K562 (cell line): ENCODE measurements at regions of chr7 and their contacts with region 1.

Region 1: GRCh38 chr7:106779877-106780276 is 85.2 kb upstream of the PIK3CG start:
- DNase-seq: peak; percentile 33 to 71 (median 56)
- ATAC-seq: peak; percentile 74
- H3K4me3 ChIP-seq: no peak overlapping the region
- H3K27ac ChIP-seq: no peak overlapping the region
- H3K4me1 ChIP-seq: peaks cover 12 to 56% of the 10 kb centered on the region in 2 experiments; a peak in 4 of 5 replicates
- H3K27me3 ChIP-seq: no peaks in the 10 kb centered on the region
- CTCF ChIP-seq: peak; percentile 66 to 84 (median 69)
- EP300 ChIP-seq: 0 out of 2 replicates have a peak, but pooled peaks have one; percentile 10
- POLR2A ChIP-seq: 0 out of 2 replicates have a peak, but pooled peaks have one; percentile 39
- RAD21 ChIP-seq: peak; percentile 38 to 68; a peak in 3 of 4 replicates

Region 2: GRCh38 chr7:106476751-106477150 is 303.1 kb before region 1 on chr7:
- CTCF ChIA-PET with region 1: no interaction called
- POLR2A ChIA-PET with region 1: no interaction called
- in situ Hi-C with region 1: no loop called
- intact Hi-C with region 1: no loop called
- DNase-seq: no peak
- ATAC-seq: peak; percentile 10; the same call in 1 of the 3 replicates
- H3K4me3 ChIP-seq: no peak overlapping the region
- H3K27ac ChIP-seq: no peak overlapping the region
- H3K4me1 ChIP-seq: peaks cover 4 to 17% of the 10 kb centered on the region in 2 experiments; a peak in 3 of 5 replicates
- H3K27me3 ChIP-seq: no peaks in the 10 kb centered on the region
- CTCF ChIP-seq: no peak
- EP300 ChIP-seq: no peak
- POLR2A ChIP-seq: no peak
- RAD21 ChIP-seq: no peak

Region 3: DNA sequence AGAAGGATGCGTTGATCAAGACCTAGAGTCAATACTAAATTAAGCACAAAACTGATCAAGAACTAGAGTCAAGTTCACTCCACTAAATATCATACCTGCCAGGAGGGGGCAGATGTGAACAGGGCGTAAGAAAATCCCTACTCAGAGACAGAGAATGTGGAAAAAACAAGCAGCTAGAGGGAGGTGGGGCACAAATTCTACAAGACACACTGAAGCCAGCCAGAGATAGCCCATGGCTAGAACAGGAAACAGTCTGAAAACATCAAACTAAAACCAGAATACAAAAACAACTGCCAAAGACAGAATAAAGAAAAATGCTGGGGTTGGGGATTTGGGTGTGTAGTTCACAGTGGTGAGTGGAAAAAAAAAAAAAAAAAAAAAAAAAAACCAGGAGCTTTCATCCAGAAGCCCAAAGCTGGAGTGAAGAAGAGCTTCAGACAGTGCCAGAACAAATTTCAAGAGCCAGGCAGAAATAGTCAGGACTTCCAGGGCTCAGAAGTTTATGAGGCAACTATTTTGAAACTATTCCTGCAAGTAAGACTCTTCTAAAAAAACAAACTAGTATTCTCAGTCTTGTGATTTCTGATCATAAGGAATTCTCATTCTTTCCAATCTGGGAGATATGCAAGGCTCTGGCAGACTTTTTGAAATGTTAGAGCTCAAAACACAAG is 237.2 kb before region 1 on chr7:
- CTCF ChIA-PET with region 1: no interaction called
- POLR2A ChIA-PET with region 1: interaction called, 11 read pairs
- in situ Hi-C with region 1: no loop called
- intact Hi-C with region 1: loop called (anchors 2 kb)
- DNase-seq: peak; percentile 77 to 96 (median 84)
- ATAC-seq: peak; percentile 96
- H3K4me3 ChIP-seq: no peak overlapping the region
- H3K27ac ChIP-seq: peak overlapping the region; percentile 30
- H3K4me1 ChIP-seq: peaks cover 0 to 22% of the 10 kb centered on the region in 2 experiments; a peak in 2 of 5 replicates
- H3K27me3 ChIP-seq: no peaks in the 10 kb centered on the region
- CTCF ChIP-seq: peak; percentile 95 to 98 (median 98)
- EP300 ChIP-seq: peak; percentile 63
- POLR2A ChIP-seq: no peak
- RAD21 ChIP-seq: peak; percentile 100

Region 4: DNA sequence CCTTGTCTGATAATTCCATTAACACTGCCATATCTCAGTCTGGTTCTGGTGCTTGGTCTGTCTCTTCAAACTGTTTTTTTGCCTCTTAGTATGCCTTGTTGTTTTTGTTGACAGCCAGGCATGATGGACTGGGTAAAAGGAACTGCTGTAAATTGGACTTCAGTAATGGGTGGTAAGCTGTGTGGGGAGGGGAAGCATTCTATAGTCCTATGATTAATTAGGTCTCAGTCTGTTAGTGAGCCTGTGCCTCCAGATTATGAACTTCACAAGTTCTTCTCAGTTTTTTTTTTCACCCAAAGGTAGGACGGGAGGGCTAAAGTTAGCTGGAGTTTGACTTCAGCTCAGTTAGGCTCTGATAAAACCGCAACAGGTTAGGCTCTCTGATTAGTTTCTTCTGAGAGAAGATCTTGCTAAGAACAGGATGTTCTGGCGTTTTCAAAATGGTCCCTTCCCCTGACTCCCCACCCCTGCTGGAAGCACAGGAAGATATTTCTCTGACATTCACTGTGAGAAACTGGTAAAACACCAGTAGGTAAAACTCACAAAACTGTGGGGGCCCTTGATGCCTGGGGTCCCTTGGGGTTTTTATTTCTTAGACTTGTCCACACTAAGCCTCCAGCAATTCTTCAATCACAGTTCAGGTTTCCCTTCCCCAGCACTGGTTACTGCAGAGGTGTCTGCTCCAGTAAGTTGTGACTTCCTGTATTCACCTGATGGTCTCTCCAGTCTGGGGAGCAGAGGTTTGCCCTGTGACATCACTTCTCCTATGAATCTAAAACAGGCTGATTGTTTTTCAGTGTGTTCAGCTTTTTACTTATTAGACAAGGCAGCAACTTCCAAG is 75.7 kb before region 1 on chr7:
- CTCF ChIA-PET with region 1: no interaction called
- POLR2A ChIA-PET with region 1: no interaction called
- in situ Hi-C with region 1: no loop called
- intact Hi-C with region 1: no loop called
- DNase-seq: peak in 2 of 4 experiments; percentile 37 to 53
- ATAC-seq: peak; percentile 90
- H3K4me3 ChIP-seq: no peak overlapping the region
- H3K27ac ChIP-seq: peak overlapping the region; percentile 4; the same call in 2 of the 3 replicates
- H3K4me1 ChIP-seq: peaks cover 0 to 10% of the 10 kb centered on the region in 2 experiments; a peak in 3 of 5 replicates
- H3K27me3 ChIP-seq: no peaks in the 10 kb centered on the region
- CTCF ChIP-seq: no peak
- EP300 ChIP-seq: no peak
- POLR2A ChIP-seq: no peak
- RAD21 ChIP-seq: no peak

Region 5: DNA sequence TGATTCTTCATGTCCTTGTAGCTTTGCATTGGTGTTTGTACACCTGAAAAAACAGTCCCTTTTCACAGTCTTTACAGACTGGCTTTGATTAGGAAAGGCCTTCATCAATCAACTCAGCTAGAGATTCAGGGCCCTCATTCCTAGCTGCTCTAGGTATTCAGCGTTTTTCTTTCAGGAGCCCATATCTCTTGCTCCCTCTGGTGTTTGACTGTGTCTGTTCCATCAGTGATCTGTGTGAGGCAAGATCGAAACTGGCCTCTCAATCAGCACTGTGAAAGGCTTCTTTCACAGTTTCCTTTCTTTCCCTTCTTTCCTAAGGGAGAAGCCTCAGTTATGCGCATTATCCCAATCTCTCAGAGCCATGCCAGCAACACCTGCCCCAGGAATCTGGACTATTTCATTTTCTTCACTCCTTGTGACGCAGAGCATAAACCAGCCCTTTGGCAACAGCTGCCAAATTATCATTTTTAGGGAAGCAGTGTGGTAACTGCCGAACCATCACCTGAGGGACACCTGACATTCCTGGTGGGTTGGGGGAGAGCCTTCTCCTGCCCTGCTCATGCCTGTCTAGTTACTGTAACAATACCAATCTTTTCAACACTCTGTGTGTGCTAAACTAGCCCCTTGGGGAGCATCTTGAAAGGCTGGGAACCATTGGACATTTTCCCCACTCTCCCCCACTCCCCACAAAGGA is 43.2 kb before region 1 on chr7:
- CTCF ChIA-PET with region 1: no interaction called
- POLR2A ChIA-PET with region 1: interaction called, 4 read pairs
- in situ Hi-C with region 1: no loop called
- intact Hi-C with region 1: loop called (anchors 2 kb)
- DNase-seq: peak; percentile 43 to 80 (median 64)
- ATAC-seq: peak; percentile 94
- H3K4me3 ChIP-seq: no peak overlapping the region
- H3K27ac ChIP-seq: peak overlapping the region; percentile 18; the same call in 1 of the 3 replicates
- H3K4me1 ChIP-seq: peaks cover 0 to 16% of the 10 kb centered on the region in 2 experiments; a peak in 2 of 5 replicates
- H3K27me3 ChIP-seq: no peaks in the 10 kb centered on the region
- CTCF ChIP-seq: peak; percentile 83 to 92 (median 90)
- EP300 ChIP-seq: peak; percentile 57; the same call in 1 of the 2 replicates
- POLR2A ChIP-seq: no peak
- RAD21 ChIP-seq: peak; percentile 97 to 99

Region 6: DNA sequence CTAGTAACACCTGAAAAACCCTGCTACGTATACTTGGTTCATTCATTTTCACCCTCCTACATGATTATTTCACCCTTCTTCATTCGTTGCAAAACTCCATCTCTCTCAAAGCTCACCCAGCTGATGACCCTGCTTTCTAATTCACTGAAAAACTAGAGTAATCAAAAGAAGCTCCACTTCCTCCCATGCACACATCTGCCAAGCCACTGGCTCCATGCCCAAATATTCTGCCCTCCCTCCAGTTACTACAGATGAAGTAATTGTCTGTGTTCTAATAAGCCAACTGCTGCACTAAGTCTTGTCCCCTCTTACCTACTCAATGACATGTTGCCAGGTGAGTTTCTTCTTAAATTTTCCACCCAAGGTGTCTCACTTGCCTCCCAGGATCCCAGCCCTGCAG is 22.0 kb before region 1 on chr7:
- CTCF ChIA-PET with region 1: no interaction called
- POLR2A ChIA-PET with region 1: interaction called, 23 read pairs
- in situ Hi-C with region 1: no loop called
- intact Hi-C with region 1: no loop called
- DNase-seq: no peak
- ATAC-seq: no peak
- H3K4me3 ChIP-seq: no peak overlapping the region
- H3K27ac ChIP-seq: no peak overlapping the region
- H3K4me1 ChIP-seq: peaks cover 7 to 23% of the 10 kb centered on the region in 2 experiments; a peak in 4 of 5 replicates
- H3K27me3 ChIP-seq: no peaks in the 10 kb centered on the region
- CTCF ChIP-seq: no peak
- EP300 ChIP-seq: no peak
- POLR2A ChIP-seq: no peak
- RAD21 ChIP-seq: no peak

Region 7: GRCh38 chr7:106793015-106793975 is 13.4 kb after region 1 on chr7:
- CTCF ChIA-PET with region 1: no interaction called
- POLR2A ChIA-PET with region 1: interaction called, 10 read pairs
- in situ Hi-C with region 1: no loop called
- intact Hi-C with region 1: no loop called
- DNase-seq: peak; percentile 59 to 78 (median 63)
- ATAC-seq: peak; percentile 53
- H3K4me3 ChIP-seq: no peak overlapping the region
- H3K27ac ChIP-seq: no peak overlapping the region
- H3K4me1 ChIP-seq: peaks cover 0 to 5% of the 10 kb centered on the region in 2 experiments; a peak in 1 of 5 replicates
- H3K27me3 ChIP-seq: no peaks in the 10 kb centered on the region
- CTCF ChIP-seq: peak; percentile 59 to 93 (median 74); a peak in 5 of 6 replicates
- EP300 ChIP-seq: no peak
- POLR2A ChIP-seq: no peak
- RAD21 ChIP-seq: peak; percentile 91 to 94